Tibial artery (tissue), 4 donors: ENCODE measurements at regions of chr18 and their contacts with region 1.

Region 1: GRCh38 chr18:23586249-23587196 is at the start of gene NPC1:
- DNase-seq: peak; percentile 92 to 97
- H3K4me3 ChIP-seq: peak within 1 kb of the TSS; percentile 80 to 98
- H3K27ac ChIP-seq: peak within 1 kb of the TSS; percentile 98 to 99
- H3K4me1 ChIP-seq: peaks cover 0 to 47% (median 27%) of the 10 kb centered on the region in 4 donors
- H3K27me3 ChIP-seq: no peaks in the 10 kb centered on the region
- CTCF ChIP-seq: peak; percentile 83 to 93

Region 2: DNA sequence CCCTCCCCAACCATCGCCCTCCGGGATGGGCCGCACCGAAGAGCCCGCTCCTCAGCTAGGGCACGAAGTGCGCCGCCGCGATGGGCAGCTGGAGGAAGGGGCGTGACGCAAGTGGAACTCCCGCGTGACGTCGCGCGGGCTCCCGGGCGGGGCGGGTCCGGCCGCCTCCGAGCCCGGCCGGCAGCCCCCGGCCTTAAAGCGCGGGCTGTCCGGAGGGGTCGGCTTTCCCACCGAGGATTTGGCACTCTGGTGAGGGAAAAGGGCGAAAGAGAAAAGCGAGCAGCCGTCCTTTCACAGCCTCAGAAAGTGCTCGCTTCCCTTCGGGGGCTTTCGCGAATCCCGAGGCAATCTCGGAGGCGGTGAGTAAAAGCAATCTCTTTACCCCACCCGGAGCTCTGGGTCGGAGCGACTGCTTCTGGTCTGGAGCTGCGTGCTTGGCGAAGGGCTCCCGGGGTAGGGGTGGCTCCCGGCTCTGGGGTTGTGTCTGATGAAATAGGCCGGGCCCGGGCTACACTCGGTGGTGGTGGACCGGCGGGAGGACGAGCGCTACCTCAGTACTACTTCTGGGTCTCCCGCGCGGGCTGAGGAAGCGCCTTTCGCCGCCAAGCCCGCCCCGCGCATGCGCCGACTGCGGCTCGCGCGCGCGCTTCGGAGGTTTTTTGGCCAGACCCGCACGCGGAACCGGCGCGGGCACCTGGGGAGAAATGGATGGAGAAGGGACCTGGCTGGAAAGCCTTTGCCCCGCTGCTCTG is 653.1 kb before region 1 on chr18 and contains the start of gene RBBP8:
- intact Hi-C with region 1: loop called (anchors 5 kb)
- DNase-seq: peak; percentile 75 to 91
- H3K4me3 ChIP-seq: peak within 1 kb of the TSS; percentile 72 to 83
- H3K27ac ChIP-seq: peak within 1 kb of the TSS; percentile 91 to 97
- H3K4me1 ChIP-seq: peaks cover 0 to 7% (median 3%) of the 10 kb centered on the region in 4 donors
- H3K27me3 ChIP-seq: no peaks in the 10 kb centered on the region
- CTCF ChIP-seq: no peak

Region 3: GRCh38 chr18:23503038-23503962 is 83.2 kb before region 1 on chr18 and contains the start of gene RMC1:
- intact Hi-C with region 1: loop called (anchors 1 kb)
- DNase-seq: peak; percentile 92 to 97
- H3K4me3 ChIP-seq: peak within 1 kb of the TSS; percentile 89 to 99
- H3K27ac ChIP-seq: peak within 1 kb of the TSS; percentile 90 to 93
- H3K4me1 ChIP-seq: peaks cover 0 to 41% (median 28%) of the 10 kb centered on the region in 4 donors
- H3K27me3 ChIP-seq: no peaks in the 10 kb centered on the region
- CTCF ChIP-seq: peak in 1 of 2 experiments; percentile 16

Region 4: GRCh38 chr18:23515911-23516546 is 70.5 kb before region 1 on chr18:
- intact Hi-C with region 1: loop called (anchors 5 kb)
- DNase-seq: peak; percentile 69 to 78
- H3K4me3 ChIP-seq: no peak overlapping the region
- H3K27ac ChIP-seq: no peak overlapping the region
- H3K4me1 ChIP-seq: peaks cover 0 to 5% (median 0%) of the 10 kb centered on the region in 4 donors
- H3K27me3 ChIP-seq: no peaks in the 10 kb centered on the region
- CTCF ChIP-seq: peak; percentile 72 to 83

Region 5: DNA sequence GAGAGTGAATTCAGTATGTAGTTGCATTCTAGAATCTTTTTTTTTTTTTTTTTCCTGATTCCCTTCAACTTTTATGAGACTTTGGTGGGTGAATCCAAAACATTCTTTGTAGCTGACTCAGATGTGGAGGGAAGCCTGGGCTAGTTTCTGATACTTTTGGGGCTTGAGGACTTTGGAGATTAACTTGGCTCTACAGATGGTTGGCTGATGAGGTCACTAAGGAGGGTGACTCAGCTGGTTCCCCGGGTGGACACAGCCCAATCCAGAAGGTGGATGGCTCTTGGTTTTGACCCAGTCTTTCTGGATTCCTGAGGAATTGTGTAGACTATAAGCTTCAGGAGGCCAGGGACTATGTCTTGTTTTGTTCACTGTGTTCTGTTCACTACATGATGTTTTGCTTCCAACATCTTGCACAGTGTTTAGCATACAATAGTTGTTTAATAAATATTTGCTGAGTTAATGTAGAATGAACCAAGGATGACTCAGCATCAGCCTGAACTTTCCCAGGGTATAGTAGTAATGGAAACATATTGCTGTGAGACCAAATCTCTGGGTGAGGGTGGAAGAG is 133.2 kb after region 1 on chr18:
- intact Hi-C with region 1: no loop called
- DNase-seq: no peak
- H3K4me3 ChIP-seq: no peak overlapping the region
- H3K27ac ChIP-seq: peak overlapping the region in 1 of 2 donors; percentile 22
- H3K4me1 ChIP-seq: peaks cover 0 to 28% (median 9%) of the 10 kb centered on the region in 4 donors
- H3K27me3 ChIP-seq: no peaks in the 10 kb centered on the region
- CTCF ChIP-seq: no peak

Region 6: GRCh38 chr18:23861805-23862470 is 275.4 kb after region 1 on chr18:
- intact Hi-C with region 1: no loop called
- DNase-seq: no peak
- H3K4me3 ChIP-seq: no peak overlapping the region
- H3K27ac ChIP-seq: peak overlapping the region; percentile 53 to 58
- H3K4me1 ChIP-seq: peaks cover 0 to 40% (median 6%) of the 10 kb centered on the region in 4 donors
- H3K27me3 ChIP-seq: no peaks in the 10 kb centered on the region
- CTCF ChIP-seq: no peak